ENCODE measurements at regions of chr1 and their contacts with region 1.

Region 1: DNA sequence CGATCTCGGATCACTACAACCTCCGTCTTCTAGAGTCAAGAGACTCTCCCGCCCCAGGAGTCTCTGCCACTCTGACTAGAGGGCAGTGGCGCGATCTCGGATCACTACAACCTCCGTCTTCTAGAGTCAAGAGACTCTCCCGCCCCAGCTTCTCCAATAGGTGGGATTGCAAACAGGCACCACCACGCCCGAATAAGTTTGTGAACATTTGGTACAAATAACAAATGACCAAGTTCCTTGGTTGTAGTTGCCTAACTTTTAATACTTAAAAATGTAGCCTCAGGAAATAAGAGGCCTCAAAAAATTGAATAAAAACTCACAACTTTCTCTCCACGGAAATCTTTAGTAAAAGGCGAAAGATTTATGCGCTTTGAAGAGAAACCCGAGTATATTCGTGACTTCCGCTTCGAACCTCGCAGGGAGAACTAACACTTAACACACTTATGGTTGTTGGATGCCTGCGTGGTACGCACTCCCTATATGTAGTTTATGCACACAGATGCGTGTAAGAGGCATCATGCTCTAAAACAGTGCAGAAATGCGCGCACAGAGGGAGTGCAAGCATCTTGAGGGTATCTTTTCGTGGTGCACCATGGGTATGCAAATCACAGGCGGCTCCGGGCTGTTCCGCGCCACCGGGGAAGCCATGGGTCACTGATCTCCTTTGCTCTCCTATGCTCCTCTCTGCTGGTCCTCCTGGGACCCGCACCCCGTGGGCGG is 11.4 kb downstream of the BTBD19 start:
- DNase-seq: peak; percentile 71 to 90 (median 79)
- ATAC-seq: peak; percentile 78
- H3K4me3 ChIP-seq: peak overlapping the region; percentile 65
- H3K4me3 Mint-ChIP-seq: peak overlapping the region; percentile 94
- H3K27ac ChIP-seq: peak overlapping the region; percentile 96 to 99
- H3K27ac Mint-ChIP-seq: peak overlapping the region; percentile 100
- H3K4me1 ChIP-seq: peaks cover 31% of the 10 kb centered on the region
- H3K4me1 Mint-ChIP-seq: peaks cover 45% of the 10 kb centered on the region
- H3K27me3 ChIP-seq: no peaks in the 10 kb centered on the region
- H3K27me3 Mint-ChIP-seq: no peaks in the 10 kb centered on the region
- CTCF ChIP-seq: no peak

Region 2: GRCh38 chr1:44158871-44159270 is 660.9 kb before region 1 on chr1:
- CTCF ChIA-PET with region 1: no interaction called
- POLR2A ChIA-PET with region 1: no interaction called
- intact Hi-C with region 1: no loop called
- DNase-seq: no peak
- ATAC-seq: no peak
- H3K4me3 ChIP-seq: no peak overlapping the region
- H3K4me3 Mint-ChIP-seq: no peak overlapping the region
- H3K27ac ChIP-seq: no peak overlapping the region
- H3K27ac Mint-ChIP-seq: no peak overlapping the region
- H3K4me1 ChIP-seq: no peaks in the 10 kb centered on the region
- H3K4me1 Mint-ChIP-seq: no peaks in the 10 kb centered on the region
- H3K27me3 ChIP-seq: no peaks in the 10 kb centered on the region
- H3K27me3 Mint-ChIP-seq: no peaks in the 10 kb centered on the region
- CTCF ChIP-seq: no peak

Region 3: GRCh38 chr1:44213222-44214112 is 606.3 kb before region 1 on chr1 and contains the start of gene DMAP1:
- CTCF ChIA-PET with region 1: no interaction called
- POLR2A ChIA-PET with region 1: no interaction called
- intact Hi-C with region 1: loop called in 1 of 2 experiments (anchors 10 kb)
- DNase-seq: peak; percentile 77 to 92 (median 82)
- ATAC-seq: peak; percentile 89
- H3K4me3 ChIP-seq: peak within 1 kb of the TSS; percentile 92
- H3K4me3 Mint-ChIP-seq: peak within 1 kb of the TSS; percentile 98
- H3K27ac ChIP-seq: peak within 1 kb of the TSS; percentile 64 to 75
- H3K27ac Mint-ChIP-seq: peak within 1 kb of the TSS; percentile 93
- H3K4me1 ChIP-seq: peaks cover 29% of the 10 kb centered on the region
- H3K4me1 Mint-ChIP-seq: peaks cover 47% of the 10 kb centered on the region
- H3K27me3 ChIP-seq: no peaks in the 10 kb centered on the region
- H3K27me3 Mint-ChIP-seq: no peaks in the 10 kb centered on the region
- CTCF ChIP-seq: no peak
- total RNA-seq, gene DMAP1: 53.4 to 56.9 TPM

Region 4: GRCh38 chr1:44730741-44731512 is 88.8 kb before region 1 on chr1 and contains the start of gene RNU5D-1:
- CTCF ChIA-PET with region 1: interaction called, 6 read pairs
- POLR2A ChIA-PET with region 1: interaction called, 43 read pairs
- intact Hi-C with region 1: loop called (anchors 1 to 5 kb)
- DNase-seq: peak; percentile 87 to 98 (median 94)
- ATAC-seq: peak; percentile 76
- H3K4me3 ChIP-seq: peak within 1 kb of the TSS; percentile 46
- H3K4me3 Mint-ChIP-seq: peak within 1 kb of the TSS; percentile 68
- H3K27ac ChIP-seq: peak within 1 kb of the TSS; percentile 93 to 96
- H3K27ac Mint-ChIP-seq: peak within 1 kb of the TSS; percentile 97
- H3K4me1 ChIP-seq: peaks cover 33% of the 10 kb centered on the region
- H3K4me1 Mint-ChIP-seq: peaks cover 35% of the 10 kb centered on the region
- H3K27me3 ChIP-seq: no peaks in the 10 kb centered on the region
- H3K27me3 Mint-ChIP-seq: no peaks in the 10 kb centered on the region
- CTCF ChIP-seq: peak; percentile 77
- total RNA-seq, gene RNU5D-1: not detected

Region 5: GRCh38 chr1:44792783-44793714 is 26.7 kb before region 1 on chr1:
- CTCF ChIA-PET with region 1: interaction called, 49 read pairs
- POLR2A ChIA-PET with region 1: interaction called, 599 read pairs
- intact Hi-C with region 1: loop called in 1 of 2 experiments (anchors 5 kb)
- DNase-seq: no peak
- ATAC-seq: no peak
- H3K4me3 ChIP-seq: no peak overlapping the region
- H3K4me3 Mint-ChIP-seq: no peak overlapping the region
- H3K27ac ChIP-seq: no peak overlapping the region
- H3K27ac Mint-ChIP-seq: no peak overlapping the region
- H3K4me1 ChIP-seq: no peaks in the 10 kb centered on the region
- H3K4me1 Mint-ChIP-seq: peaks cover 4% of the 10 kb centered on the region
- H3K27me3 ChIP-seq: no peaks in the 10 kb centered on the region
- H3K27me3 Mint-ChIP-seq: no peaks in the 10 kb centered on the region
- CTCF ChIP-seq: no peak

Region 6: GRCh38 chr1:44807262-44808062 is 12.3 kb before region 1 on chr1 and contains the start of gene DYNLT4:
- CTCF ChIA-PET with region 1: interaction called, 57 read pairs
- POLR2A ChIA-PET with region 1: interaction called, 599 read pairs
- intact Hi-C with region 1: loop called in 1 of 2 experiments (anchors 1 kb)
- DNase-seq: peak; percentile 82 to 98 (median 94)
- ATAC-seq: peak; percentile 56
- H3K4me3 ChIP-seq: peak within 1 kb of the TSS; percentile 12
- H3K4me3 Mint-ChIP-seq: peak within 1 kb of the TSS; percentile 83
- H3K27ac ChIP-seq: peak within 1 kb of the TSS; percentile 99 to 100
- H3K27ac Mint-ChIP-seq: peak within 1 kb of the TSS; percentile 99
- H3K4me1 ChIP-seq: peaks cover 100% of the 10 kb centered on the region
- H3K4me1 Mint-ChIP-seq: peaks cover 79% of the 10 kb centered on the region
- H3K27me3 ChIP-seq: no peaks in the 10 kb centered on the region
- H3K27me3 Mint-ChIP-seq: peaks cover 4% of the 10 kb centered on the region
- CTCF ChIP-seq: no peak
- total RNA-seq, gene DYNLT4: 1.8 to 2.1 TPM

Region 7: GRCh38 chr1:44985747-44986359 is 166.1 kb after region 1 on chr1:
- CTCF ChIA-PET with region 1: no interaction called
- POLR2A ChIA-PET with region 1: interaction called, 10 read pairs
- intact Hi-C with region 1: no loop called
- DNase-seq: no peak
- ATAC-seq: no peak
- H3K4me3 ChIP-seq: peak overlapping the region; percentile 73
- H3K4me3 Mint-ChIP-seq: peak overlapping the region; percentile 99
- H3K27ac ChIP-seq: no peak overlapping the region
- H3K27ac Mint-ChIP-seq: peak overlapping the region; percentile 74
- H3K4me1 ChIP-seq: peaks cover 20% of the 10 kb centered on the region
- H3K4me1 Mint-ChIP-seq: peaks cover 32% of the 10 kb centered on the region
- H3K27me3 ChIP-seq: no peaks in the 10 kb centered on the region
- H3K27me3 Mint-ChIP-seq: no peaks in the 10 kb centered on the region
- CTCF ChIP-seq: no peak